Activated CD4-positive, alpha-beta T cell treated with anti-CD3 and anti-CD28 coated beads for 36 hours (primary cell): ENCODE measurements at regions of chr6 and their contacts with region 1.

Region 1: GRCh38 chr6:160659562-160659961 is 4.5 kb downstream of the LPA start:
- DNase-seq: no peak
- ATAC-seq: no peak
- H3K4me3 Mint-ChIP-seq: no peak overlapping the region
- H3K27ac Mint-ChIP-seq: no peak overlapping the region
- H3K4me1 Mint-ChIP-seq: no peaks in the 10 kb centered on the region
- H3K27me3 Mint-ChIP-seq: peaks cover 6% of the 10 kb centered on the region

Region 2: DNA sequence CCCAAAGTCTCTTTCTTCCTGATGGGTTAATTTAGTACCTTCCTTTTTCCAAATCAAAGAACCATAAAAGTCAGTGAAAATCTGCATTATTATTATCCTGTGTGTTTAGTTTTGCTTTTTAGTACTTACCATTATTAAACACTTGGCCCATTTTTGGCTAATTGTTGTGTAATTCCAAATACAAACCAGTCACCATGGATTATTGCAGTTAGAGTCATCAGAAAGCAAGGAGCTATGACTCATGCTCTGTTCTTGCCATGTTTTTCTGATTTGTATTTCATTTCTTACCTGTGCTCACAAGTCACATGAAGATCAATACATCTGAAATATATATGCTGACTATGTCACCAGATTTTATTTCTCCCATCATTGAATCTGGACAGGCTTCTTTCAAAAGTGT is 280.1 kb before region 1 on chr6:
- CTCF ChIA-PET with region 1: no interaction called
- POLR2A ChIA-PET with region 1: no interaction called
- intact Hi-C with region 1: no loop called
- DNase-seq: no peak
- ATAC-seq: no peak
- H3K4me3 Mint-ChIP-seq: no peak overlapping the region
- H3K27ac Mint-ChIP-seq: no peak overlapping the region
- H3K4me1 Mint-ChIP-seq: no peaks in the 10 kb centered on the region
- H3K27me3 Mint-ChIP-seq: peaks cover 5% of the 10 kb centered on the region

Region 3: GRCh38 chr6:160505970-160506369 is 153.6 kb before region 1 on chr6:
- CTCF ChIA-PET with region 1: interaction called, 3 read pairs
- POLR2A ChIA-PET with region 1: no interaction called
- intact Hi-C with region 1: loop called in 1 of 2 experiments (anchors 2 kb)
- DNase-seq: no peak
- ATAC-seq: no peak
- H3K4me3 Mint-ChIP-seq: no peak overlapping the region
- H3K27ac Mint-ChIP-seq: no peak overlapping the region
- H3K4me1 Mint-ChIP-seq: no peaks in the 10 kb centered on the region
- H3K27me3 Mint-ChIP-seq: no peaks in the 10 kb centered on the region

Region 4: GRCh38 chr6:160595838-160596832 is 63.4 kb before region 1 on chr6:
- CTCF ChIA-PET with region 1: no interaction called
- POLR2A ChIA-PET with region 1: no interaction called
- intact Hi-C with region 1: loop called in 1 of 2 experiments (anchors 10 kb)
- DNase-seq: no peak
- ATAC-seq: no peak
- H3K4me3 Mint-ChIP-seq: no peak overlapping the region
- H3K27ac Mint-ChIP-seq: no peak overlapping the region
- H3K4me1 Mint-ChIP-seq: no peaks in the 10 kb centered on the region
- H3K27me3 Mint-ChIP-seq: peaks cover 16% of the 10 kb centered on the region